Ascending aorta (tissue), 2 donors: ENCODE measurements at regions of chr11 and their contacts with region 1.

Region 1: GRCh38 chr11:73141848-73142286 is 251 bp downstream of the FCHSD2 start:
- DNase-seq: peak; percentile 26 to 86
- H3K4me3 ChIP-seq: peak overlapping the region; percentile 98 to 99
- H3K27ac ChIP-seq: peak overlapping the region; percentile 99 to 100
- H3K4me1 ChIP-seq: peaks cover 8 to 23% of the 10 kb centered on the region in 2 donors
- H3K27me3 ChIP-seq: no peaks in the 10 kb centered on the region
- CTCF ChIP-seq: no peak

Region 2: GRCh38 chr11:73157053-73158010 is 15.5 kb after region 1 on chr11:
- intact Hi-C with region 1: loop called (anchors 2 kb)
- DNase-seq: peak; percentile 29 to 92
- H3K4me3 ChIP-seq: no peak overlapping the region
- H3K27ac ChIP-seq: peak overlapping the region; percentile 82 to 87
- H3K4me1 ChIP-seq: peaks cover 16 to 38% of the 10 kb centered on the region in 2 donors
- H3K27me3 ChIP-seq: no peaks in the 10 kb centered on the region
- CTCF ChIP-seq: no peak